ENCODE measurements at regions of chr13 and their contacts with region 1.

Region 1: DNA sequence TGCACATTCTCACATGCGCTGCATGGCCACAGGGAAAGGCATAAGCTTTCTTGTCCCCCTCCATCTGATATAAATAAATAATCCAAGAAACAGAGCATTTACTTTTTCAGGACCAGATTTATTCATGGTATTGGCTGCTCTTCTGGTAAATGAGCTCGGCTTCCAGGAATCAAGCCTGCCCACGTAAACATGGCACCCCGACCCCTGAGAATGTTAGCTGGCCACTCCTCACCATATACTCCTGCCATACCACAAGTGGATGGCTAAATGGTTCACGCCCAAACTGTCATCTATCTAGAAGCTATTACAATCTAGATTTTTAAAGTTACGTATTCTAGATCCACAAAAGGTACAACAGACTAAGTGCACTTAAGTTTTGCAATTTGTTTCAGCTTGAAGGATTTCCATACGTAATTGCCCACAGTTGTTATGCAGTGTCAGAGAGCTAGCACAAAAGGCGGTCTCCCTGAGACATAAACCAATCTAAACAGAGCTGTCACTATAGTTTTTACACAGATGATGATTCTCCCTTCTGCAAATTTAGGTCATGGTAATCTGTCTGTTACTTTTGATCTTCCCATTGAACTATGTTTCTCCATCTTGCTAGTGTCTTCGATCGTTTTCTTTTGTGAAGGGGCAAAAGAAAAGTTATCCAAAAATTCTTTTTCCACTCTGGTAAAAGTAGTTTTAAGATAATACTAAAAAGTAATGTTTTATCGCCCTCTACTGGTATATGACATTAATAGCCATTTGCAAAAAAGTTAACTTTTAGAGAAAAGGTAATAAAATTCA is 16.2 kb upstream of the FOXO1 start:
- DNase-seq: no peak
- ATAC-seq: no peak
- H3K4me3 ChIP-seq: no peak overlapping the region
- H3K27ac ChIP-seq: no peak overlapping the region
- H3K4me1 ChIP-seq: peaks cover 0 to 7% of the 10 kb centered on the region in 2 experiments; a peak in 2 of 5 replicates
- H3K27me3 ChIP-seq: peaks cover 3 to 4% of the 10 kb centered on the region in 2 experiments; a peak in 3 of 5 replicates
- CTCF ChIP-seq: peak in 1 of 3 experiments; percentile 57; a peak in 2 of 6 replicates
- EP300 ChIP-seq: no peak
- POLR2A ChIP-seq: no peak
- RAD21 ChIP-seq: peak; percentile 52 to 64

Region 2: GRCh38 chr13:38979891-38980749 is 1702.5 kb before region 1 on chr13:
- CTCF ChIA-PET with region 1: no interaction called
- POLR2A ChIA-PET with region 1: no interaction called
- in situ Hi-C with region 1: loop called (anchors 25 kb)
- intact Hi-C with region 1: no loop called
- DNase-seq: no peak
- ATAC-seq: peak; percentile 43; the same call in 2 of the 3 replicates
- H3K4me3 ChIP-seq: no peak overlapping the region
- H3K27ac ChIP-seq: no peak overlapping the region
- H3K4me1 ChIP-seq: no peaks in the 10 kb centered on the region
- H3K27me3 ChIP-seq: no peaks in the 10 kb centered on the region
- CTCF ChIP-seq: no peak
- EP300 ChIP-seq: no peak
- POLR2A ChIP-seq: no peak
- RAD21 ChIP-seq: no peak

Region 3: DNA sequence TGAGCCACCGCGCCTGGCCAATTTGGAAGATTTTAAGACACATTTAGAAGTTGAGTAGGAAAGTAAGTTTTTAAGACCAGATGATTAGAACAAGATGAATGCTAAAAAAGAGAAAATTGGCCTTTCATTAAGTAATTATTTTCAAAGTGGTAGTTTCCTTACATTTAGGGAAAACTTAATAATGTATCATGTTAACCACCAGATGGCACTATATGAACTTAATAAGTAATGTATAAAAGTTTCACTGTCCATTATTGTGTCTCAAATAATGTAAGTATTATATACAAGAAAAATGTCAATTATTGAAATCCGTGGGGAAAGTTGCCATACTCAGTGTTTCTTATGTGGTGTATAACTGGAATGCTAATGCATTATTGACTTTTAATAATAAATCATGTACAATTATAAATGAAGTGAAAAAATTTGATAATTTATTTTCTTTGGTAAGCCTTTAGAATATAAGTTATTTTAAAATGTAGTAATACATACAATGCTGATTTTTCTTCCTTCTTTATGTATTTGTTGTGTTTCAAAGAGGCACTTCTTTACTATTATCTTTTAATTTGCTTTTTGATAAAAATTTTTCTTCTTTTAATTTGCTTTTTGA is 998.0 kb before region 1 on chr13:
- CTCF ChIA-PET with region 1: interaction called, 5 read pairs
- POLR2A ChIA-PET with region 1: no interaction called
- in situ Hi-C with region 1: no loop called
- intact Hi-C with region 1: loop called (anchors 10 kb)
- DNase-seq: peak in 2 of 4 experiments; percentile 3 to 5
- ATAC-seq: no peak
- H3K4me3 ChIP-seq: no peak overlapping the region
- H3K27ac ChIP-seq: no peak overlapping the region
- H3K4me1 ChIP-seq: no peaks in the 10 kb centered on the region
- H3K27me3 ChIP-seq: no peaks in the 10 kb centered on the region
- CTCF ChIP-seq: peak in 1 of 3 experiments; percentile 34; a peak in 2 of 6 replicates
- EP300 ChIP-seq: no peak
- POLR2A ChIP-seq: no peak
- RAD21 ChIP-seq: peak in 1 of 2 experiments; percentile 42; a peak in 2 of 4 replicates

Region 4: DNA sequence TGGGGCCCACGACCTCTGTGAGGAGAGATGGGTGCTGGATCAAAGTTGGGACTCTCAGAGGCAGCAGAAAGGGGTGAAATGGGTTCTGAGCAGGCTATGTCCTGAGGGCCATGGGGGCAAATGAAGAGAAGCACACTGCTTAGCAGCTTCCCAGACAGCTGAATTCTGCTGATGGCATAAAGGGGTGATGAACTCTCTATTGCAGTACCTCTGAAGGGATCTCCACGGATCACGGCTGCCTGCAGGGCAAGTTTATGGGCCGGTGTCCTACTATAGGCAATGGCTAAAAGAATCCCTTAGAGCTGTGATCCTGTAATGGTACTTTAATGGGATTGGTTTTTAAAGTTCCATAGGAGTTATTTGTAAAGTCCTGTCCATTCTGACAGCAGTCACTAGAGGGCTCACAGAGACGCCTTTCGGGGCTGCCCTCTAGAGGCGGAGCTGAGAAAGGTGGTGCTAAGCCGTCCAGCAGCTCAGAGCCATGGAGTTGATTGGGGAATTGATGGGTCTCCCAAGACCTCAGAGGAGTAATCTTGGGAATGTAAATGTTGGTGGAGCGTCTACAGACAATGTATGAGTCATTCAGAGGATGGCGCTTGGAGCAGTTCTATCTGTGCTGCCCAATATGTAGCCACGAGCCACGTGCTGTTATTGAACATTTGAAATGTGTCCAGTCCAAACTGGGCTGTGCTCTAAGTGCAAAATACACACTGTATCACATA is 739.9 kb before region 1 on chr13:
- CTCF ChIA-PET with region 1: interaction called, 10 read pairs
- POLR2A ChIA-PET with region 1: no interaction called
- in situ Hi-C with region 1: no loop called
- intact Hi-C with region 1: loop called (anchors 10 kb)
- DNase-seq: peak; percentile 26 to 62 (median 46)
- ATAC-seq: peak; percentile 99
- H3K4me3 ChIP-seq: no peak overlapping the region
- H3K27ac ChIP-seq: no peak overlapping the region
- H3K4me1 ChIP-seq: no peaks in the 10 kb centered on the region
- H3K27me3 ChIP-seq: no peaks in the 10 kb centered on the region
- CTCF ChIP-seq: peak; percentile 94 to 100 (median 100)
- EP300 ChIP-seq: no peak
- POLR2A ChIP-seq: no peak
- RAD21 ChIP-seq: peak; percentile 50 to 72

Region 5: DNA sequence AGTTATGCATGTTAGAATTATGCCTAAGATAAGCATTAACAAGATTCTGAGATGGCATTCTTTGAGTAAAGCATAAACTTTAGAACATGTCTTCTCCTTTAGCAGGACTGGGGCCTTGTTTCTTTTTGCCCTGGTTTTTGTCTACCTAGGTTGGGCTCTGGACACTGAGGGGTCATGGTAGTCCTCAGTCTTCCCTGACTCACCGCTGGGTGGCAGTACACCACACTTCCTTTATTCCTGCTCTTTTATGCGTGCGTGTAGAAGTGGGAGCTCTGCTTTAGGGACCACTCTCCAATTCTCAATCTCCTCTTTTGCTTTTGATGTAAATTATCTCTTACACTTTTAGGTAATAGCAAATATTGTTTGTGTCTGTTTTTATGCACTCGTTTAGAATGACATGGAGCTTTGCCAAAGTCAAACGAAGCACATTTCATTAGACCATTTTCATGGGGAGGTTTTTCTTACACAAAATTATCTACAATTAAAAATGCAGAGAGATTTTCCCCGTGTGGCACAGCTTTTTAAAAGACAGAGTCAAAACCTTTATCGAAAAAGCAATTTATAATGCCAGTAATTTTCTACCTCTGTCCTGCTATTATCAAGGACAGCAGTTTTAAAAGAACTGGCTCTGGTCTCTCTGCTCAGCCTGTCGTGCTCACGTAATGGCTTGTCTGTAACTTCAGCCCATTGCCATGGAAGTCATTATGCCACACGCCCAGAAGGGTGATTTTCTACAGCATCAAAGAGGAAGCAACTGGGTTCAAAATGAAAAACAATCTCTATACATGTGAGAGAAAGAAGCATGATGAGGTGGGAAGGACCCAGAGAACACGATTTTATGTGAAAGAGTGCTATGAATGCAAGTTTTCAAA is 613.2 kb before region 1 on chr13:
- CTCF ChIA-PET with region 1: interaction called, 9 read pairs
- POLR2A ChIA-PET with region 1: no interaction called
- in situ Hi-C with region 1: loop called (anchors 25 kb)
- intact Hi-C with region 1: loop called (anchors 2 kb)
- DNase-seq: peak; percentile 29 to 51 (median 38)
- ATAC-seq: peak; percentile 93
- H3K4me3 ChIP-seq: no peak overlapping the region
- H3K27ac ChIP-seq: no peak overlapping the region
- H3K4me1 ChIP-seq: no peaks in the 10 kb centered on the region
- H3K27me3 ChIP-seq: no peaks in the 10 kb centered on the region; a peak in 2 of 5 replicates
- CTCF ChIP-seq: peak; percentile 57 to 63 (median 63); a peak in 5 of 6 replicates
- EP300 ChIP-seq: no peak
- POLR2A ChIP-seq: no peak
- RAD21 ChIP-seq: peak; percentile 50 to 59

Measured in K562 (cell line).